Activated CD4-positive, alpha-beta memory T cell treated with anti-CD3 and anti-CD28 coated beads, Interleukin-2, amount 10 ng/mL, durations not matched to agents 7 days and 5 days (primary cell): ENCODE measurements at regions of chr11 and their contacts with region 1.

Region 1: GRCh38 chr11:9314291-9315036 is at the start of gene TMEM41B:
- DNase-seq: peak; percentile 99
- H3K4me3 Mint-ChIP-seq: peak within 1 kb of the TSS; percentile 92
- H3K27ac Mint-ChIP-seq: peak within 1 kb of the TSS; percentile 91
- H3K4me1 Mint-ChIP-seq: peaks cover 36% of the 10 kb centered on the region
- H3K27me3 Mint-ChIP-seq: peaks cover 21% of the 10 kb centered on the region
- total RNA-seq, gene TMEM41B: 43.3 to 49.0 TPM

Region 2: DNA sequence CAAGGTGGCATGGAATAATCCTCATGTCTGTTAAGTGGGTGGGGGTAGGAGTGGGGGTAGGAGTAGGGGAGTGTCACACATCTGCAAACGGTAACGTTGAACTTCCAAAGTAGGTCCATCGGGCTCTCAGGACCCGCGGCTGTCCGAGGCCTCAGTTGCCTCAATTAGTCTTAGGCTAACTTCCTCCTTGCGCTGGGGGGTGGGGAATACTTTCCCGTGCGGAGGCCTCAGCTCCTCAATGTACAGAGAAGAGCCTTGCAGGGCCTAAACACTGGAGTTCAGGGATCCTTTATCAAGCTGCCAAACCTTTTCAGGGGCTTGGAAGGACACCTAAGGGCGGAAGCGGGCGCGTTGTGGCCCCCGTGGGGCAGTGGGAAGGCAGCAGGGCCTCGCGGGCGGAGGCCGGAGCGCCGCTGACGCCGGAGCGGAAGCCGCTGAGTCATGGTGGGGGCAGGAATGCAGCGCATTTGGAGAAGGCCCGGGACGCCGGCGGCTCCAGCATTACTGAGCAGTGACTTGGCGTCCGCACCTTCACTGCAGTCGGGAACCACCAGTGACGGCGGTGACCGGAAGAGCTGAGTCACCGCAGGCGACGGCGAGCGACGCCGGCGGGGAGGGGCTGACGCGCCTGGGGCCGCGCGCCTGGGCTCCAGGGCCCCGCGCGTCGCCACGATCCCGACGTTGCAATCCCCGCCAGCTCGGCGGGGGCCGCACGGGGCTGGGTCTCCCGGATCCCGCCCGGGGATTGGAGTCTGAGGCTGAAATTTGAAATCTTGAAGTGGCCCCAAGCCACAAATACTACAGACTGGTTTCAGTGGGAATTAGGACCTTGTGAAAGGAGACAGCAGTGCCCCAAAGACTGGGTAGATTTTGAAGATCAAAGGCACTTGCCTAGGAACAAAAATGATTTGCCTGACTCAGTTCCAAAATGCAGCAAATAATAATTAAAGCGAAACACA is 49.8 kb after region 1 on chr11:
- CTCF ChIA-PET with region 1: no interaction called
- POLR2A ChIA-PET with region 1: interaction called, 10 read pairs
- DNase-seq: peak; percentile 84
- H3K4me3 Mint-ChIP-seq: peak overlapping the region; percentile 73
- H3K27ac Mint-ChIP-seq: peak overlapping the region; percentile 79
- H3K4me1 Mint-ChIP-seq: peaks cover 35% of the 10 kb centered on the region
- H3K27me3 Mint-ChIP-seq: no peaks in the 10 kb centered on the region